ENCODE measurements at regions of chr19 and their contacts with region 1.

Region 1: GRCh38 chr19:15297416-15298224 is 34.7 kb downstream of the BRD4 start:
- DNase-seq: peak; percentile 37 to 85
- ATAC-seq: peak; percentile 80 to 92
- H3K4me3 ChIP-seq: 0 out of 3 replicates have a peak overlapping the region, but pooled peaks have one; percentile 22
- H3K27ac ChIP-seq: peak overlapping the region; percentile 81 to 88
- H3K4me1 ChIP-seq: peaks cover 100% of the 10 kb centered on the region
- CTCF ChIP-seq: peak; percentile 12; the same call in 1 of the 3 replicates
- EP300 ChIP-seq: peak; percentile 51 to 79; a peak in 2 of 5 replicates
- POLR2A ChIP-seq: no peak
- RAD21 ChIP-seq: no peak; a peak in 1 of 5 replicates

Region 2: GRCh38 chr19:15199921-15200887 is 97.4 kb before region 1 on chr19:
- CTCF ChIA-PET with region 1: no interaction called
- POLR2A ChIA-PET with region 1: no interaction called
- DNase-seq: no peak
- ATAC-seq: no peak
- H3K4me3 ChIP-seq: peak overlapping the region; percentile 68
- H3K27ac ChIP-seq: peak overlapping the region; percentile 67 to 96
- H3K4me1 ChIP-seq: peaks cover 18% of the 10 kb centered on the region
- CTCF ChIP-seq: no peak
- EP300 ChIP-seq: no peak
- POLR2A ChIP-seq: no peak
- RAD21 ChIP-seq: no peak

Region 3: GRCh38 chr19:15318241-15318691 is 20.6 kb after region 1 on chr19:
- CTCF ChIA-PET with region 1: interaction called, 12 read pairs
- POLR2A ChIA-PET with region 1: no interaction called
- DNase-seq: no peak
- ATAC-seq: no peak
- H3K4me3 ChIP-seq: no peak overlapping the region
- H3K27ac ChIP-seq: no peak overlapping the region
- H3K4me1 ChIP-seq: peaks cover 51% of the 10 kb centered on the region
- CTCF ChIP-seq: no peak
- EP300 ChIP-seq: no peak
- POLR2A ChIP-seq: no peak
- RAD21 ChIP-seq: no peak